ENCODE measurements at regions of chr15 and their contacts with region 1.

Region 1: DNA sequence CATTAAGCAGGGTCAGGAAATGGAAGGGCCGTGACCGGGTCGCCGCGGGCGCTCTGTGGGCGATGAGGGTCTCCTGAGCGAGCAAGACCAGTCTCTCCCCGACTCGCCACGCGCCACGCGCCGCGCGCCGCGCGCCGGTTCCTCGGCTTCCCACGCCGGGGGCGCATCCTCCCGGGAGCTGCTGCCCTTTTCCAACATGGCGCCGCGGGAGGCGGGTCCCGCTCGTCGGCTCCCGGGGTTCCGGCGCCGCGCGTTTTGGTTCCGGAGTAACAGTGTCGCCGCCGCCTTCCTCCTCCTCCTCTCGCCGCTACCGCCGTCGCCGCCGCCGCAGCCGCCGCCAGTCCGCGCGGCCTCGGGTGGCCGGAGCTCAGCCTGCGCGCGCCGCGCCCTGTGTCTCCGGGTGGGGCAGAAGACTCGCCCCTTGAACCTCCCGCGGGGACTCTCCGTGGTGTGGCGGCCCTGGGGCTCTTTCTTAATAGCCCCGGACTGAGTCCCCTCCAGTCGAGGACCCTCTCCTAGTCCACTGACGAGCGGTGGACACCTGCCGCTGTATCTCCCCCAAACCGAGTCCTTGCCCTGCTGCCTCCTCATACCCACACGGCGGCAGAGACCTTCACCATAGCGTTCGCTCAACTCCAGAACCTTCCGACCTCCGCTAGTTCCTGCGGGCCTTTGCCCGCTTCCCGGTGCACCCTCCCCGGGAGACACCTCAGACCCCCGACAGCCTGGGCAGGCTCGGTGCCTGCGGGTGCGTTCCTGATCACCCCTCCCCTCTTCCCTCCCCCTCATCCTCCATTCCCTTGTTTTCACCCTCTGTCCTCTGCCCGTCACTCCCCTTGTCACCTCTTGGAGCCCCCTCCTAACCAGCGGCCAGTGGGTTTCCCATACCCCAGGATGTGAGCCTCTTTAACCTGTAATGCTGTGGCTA is at the start of gene MAP2K5:
- DNase-seq: peak; percentile 57 to 91 (median 82)
- ATAC-seq: peak; percentile 71
- H3K4me3 ChIP-seq: peak within 1 kb of the TSS; percentile 91 to 93
- H3K4me3 Mint-ChIP-seq: peak within 1 kb of the TSS; percentile 97
- H3K27ac ChIP-seq: peak within 1 kb of the TSS; percentile 81 to 86
- H3K27ac Mint-ChIP-seq: peak within 1 kb of the TSS; percentile 99
- H3K4me1 ChIP-seq: peaks cover 24% of the 10 kb centered on the region
- H3K4me1 Mint-ChIP-seq: peaks cover 56% of the 10 kb centered on the region
- H3K27me3 ChIP-seq: no peaks in the 10 kb centered on the region
- H3K27me3 Mint-ChIP-seq: no peaks in the 10 kb centered on the region
- CTCF ChIP-seq: no peak
- total RNA-seq, gene MAP2K5: 20.5 to 21.2 TPM

Region 2: GRCh38 chr15:67254238-67255175 is 288.2 kb before region 1 on chr15 and contains the starts of genes AAGAB and IQCH:
- CTCF ChIA-PET with region 1: no interaction called
- POLR2A ChIA-PET with region 1: no interaction called
- intact Hi-C with region 1: loop called in 1 of 2 experiments (anchors 10 kb)
- DNase-seq: peak; percentile 93 to 99 (median 97)
- ATAC-seq: peak; percentile 93
- H3K4me3 ChIP-seq: peak within 1 kb of the TSS; percentile 78 to 92
- H3K4me3 Mint-ChIP-seq: peak within 1 kb of the TSS; percentile 98
- H3K27ac ChIP-seq: peak within 1 kb of the TSS; percentile 79 to 86
- H3K27ac Mint-ChIP-seq: peak within 1 kb of the TSS; percentile 98
- H3K4me1 ChIP-seq: peaks cover 13% of the 10 kb centered on the region
- H3K4me1 Mint-ChIP-seq: peaks cover 44% of the 10 kb centered on the region
- H3K27me3 ChIP-seq: peaks cover 0 to 3% of the 10 kb centered on the region in 2 experiments
- H3K27me3 Mint-ChIP-seq: no peaks in the 10 kb centered on the region
- CTCF ChIP-seq: no peak
- total RNA-seq, gene AAGAB: 17.0 to 18.0 TPM
- total RNA-seq, gene IQCH: 0.39 to 0.60 TPM

Region 3: GRCh38 chr15:67521029-67521811 is 21.5 kb before region 1 on chr15 and contains the start of gene C15orf61:
- CTCF ChIA-PET with region 1: no interaction called
- POLR2A ChIA-PET with region 1: interaction called, 43 read pairs
- intact Hi-C with region 1: loop called (anchors 1 kb)
- DNase-seq: peak; percentile 61 to 94 (median 84)
- ATAC-seq: peak; percentile 82
- H3K4me3 ChIP-seq: peak within 1 kb of the TSS; percentile 92 to 95
- H3K4me3 Mint-ChIP-seq: peak within 1 kb of the TSS; percentile 93
- H3K27ac ChIP-seq: peak within 1 kb of the TSS; percentile 72 to 92
- H3K27ac Mint-ChIP-seq: peak within 1 kb of the TSS; percentile 94
- H3K4me1 ChIP-seq: peaks cover 14% of the 10 kb centered on the region
- H3K4me1 Mint-ChIP-seq: peaks cover 36% of the 10 kb centered on the region
- H3K27me3 ChIP-seq: no peaks in the 10 kb centered on the region
- H3K27me3 Mint-ChIP-seq: no peaks in the 10 kb centered on the region
- CTCF ChIP-seq: no peak
- total RNA-seq, gene C15orf61: 11.2 to 14.4 TPM

Region 4: GRCh38 chr15:68229386-68230156 is 686.9 kb after region 1 on chr15 and contains the start of gene CLN6:
- CTCF ChIA-PET with region 1: no interaction called
- POLR2A ChIA-PET with region 1: no interaction called
- intact Hi-C with region 1: loop called in 1 of 2 experiments (anchors 5 kb)
- DNase-seq: peak; percentile 55 to 91 (median 80)
- ATAC-seq: peak; percentile 87
- H3K4me3 ChIP-seq: peak within 1 kb of the TSS; percentile 86 to 90
- H3K4me3 Mint-ChIP-seq: peak within 1 kb of the TSS; percentile 93
- H3K27ac ChIP-seq: peak within 1 kb of the TSS; percentile 60 to 62
- H3K27ac Mint-ChIP-seq: peak within 1 kb of the TSS; percentile 88
- H3K4me1 ChIP-seq: peaks cover 23% of the 10 kb centered on the region
- H3K4me1 Mint-ChIP-seq: peaks cover 36% of the 10 kb centered on the region
- H3K27me3 ChIP-seq: no peaks in the 10 kb centered on the region
- H3K27me3 Mint-ChIP-seq: peaks cover 5% of the 10 kb centered on the region
- CTCF ChIP-seq: peak; percentile 27
- total RNA-seq, gene CLN6: 7.6 to 7.9 TPM

Region 5: GRCh38 chr15:68561901-68562300 is 1019.2 kb after region 1 on chr15:
- CTCF ChIA-PET with region 1: no interaction called
- POLR2A ChIA-PET with region 1: no interaction called
- intact Hi-C with region 1: no loop called
- DNase-seq: no peak
- ATAC-seq: no peak
- H3K4me3 ChIP-seq: no peak overlapping the region
- H3K4me3 Mint-ChIP-seq: no peak overlapping the region
- H3K27ac ChIP-seq: no peak overlapping the region
- H3K27ac Mint-ChIP-seq: no peak overlapping the region
- H3K4me1 ChIP-seq: peaks cover 8% of the 10 kb centered on the region
- H3K4me1 Mint-ChIP-seq: peaks cover 18% of the 10 kb centered on the region
- H3K27me3 ChIP-seq: peaks cover 0 to 15% of the 10 kb centered on the region in 2 experiments
- H3K27me3 Mint-ChIP-seq: peaks cover 34% of the 10 kb centered on the region
- CTCF ChIP-seq: no peak

Measured in CD8-positive, alpha-beta T cell (primary cell).